Body of pancreas (tissue), 4 donors: ENCODE measurements at regions of chr7 and their contacts with region 1.

Region 1: DNA sequence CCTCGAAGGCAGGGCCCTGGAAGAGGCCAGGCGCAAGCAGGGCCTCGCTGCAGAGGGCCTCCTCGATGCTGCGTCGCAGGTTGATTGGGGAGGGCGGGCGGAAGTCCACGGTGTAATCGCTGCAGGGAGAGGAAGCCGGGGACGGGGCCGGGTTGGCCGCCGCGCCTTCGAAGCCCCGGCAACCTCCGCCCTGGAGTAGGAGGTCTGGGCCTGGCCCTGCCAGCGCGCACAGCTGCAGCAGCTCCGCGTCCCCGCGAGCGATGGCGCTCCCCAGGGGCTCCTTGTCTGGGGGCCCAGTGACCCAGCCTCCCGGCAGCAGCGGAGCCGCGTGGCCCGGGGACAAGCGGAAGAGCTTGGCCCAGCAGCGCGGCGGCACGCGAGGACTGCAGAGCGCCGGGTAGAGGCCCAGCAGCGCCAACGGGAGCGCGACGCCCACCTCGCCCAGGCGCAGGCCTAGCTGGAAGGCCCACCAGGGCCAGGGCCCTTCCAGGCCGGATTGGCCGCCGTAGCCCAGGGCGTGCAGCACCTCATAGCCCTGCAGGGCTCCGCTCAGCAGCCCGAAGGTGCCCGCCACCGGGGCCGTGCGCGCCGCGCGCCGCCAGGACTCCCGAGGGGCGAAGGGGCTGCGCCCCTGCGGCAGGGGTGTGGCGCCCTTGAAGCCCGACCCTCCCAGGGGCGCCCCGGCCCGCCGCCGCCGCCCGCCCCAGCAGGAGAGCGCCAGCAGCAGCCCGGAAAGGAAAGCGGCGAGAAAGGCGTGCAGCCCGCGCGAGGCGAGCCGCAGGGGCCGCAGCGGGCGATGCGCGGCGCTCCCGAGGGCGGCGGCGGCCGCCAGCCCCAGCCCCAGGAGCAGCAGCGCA is 7.8 kb upstream of the RBM28 start:
- DNase-seq: no peak
- ATAC-seq: no peak
- H3K4me3 ChIP-seq: no peak overlapping the region
- H3K27ac ChIP-seq: no peak overlapping the region
- H3K4me1 ChIP-seq: peaks cover 12% of the 10 kb centered on the region
- H3K27me3 ChIP-seq: peaks cover 0 to 11% of the 10 kb centered on the region in 2 donors
- CTCF ChIP-seq: no peak
- POLR2A ChIP-seq: no peak

Region 2: GRCh38 chr7:128387216-128388144 is 36.0 kb after region 1 on chr7:
- intact Hi-C with region 1: loop called (anchors 2 kb)
- DNase-seq: peak; percentile 69 to 77 (median 73)
- ATAC-seq: peak; percentile 79
- H3K4me3 ChIP-seq: no peak overlapping the region
- H3K27ac ChIP-seq: no peak overlapping the region
- H3K4me1 ChIP-seq: no peaks in the 10 kb centered on the region
- H3K27me3 ChIP-seq: no peaks in the 10 kb centered on the region
- CTCF ChIP-seq: peak; percentile 54 to 86 (median 73)
- POLR2A ChIP-seq: no peak

Region 3: DNA sequence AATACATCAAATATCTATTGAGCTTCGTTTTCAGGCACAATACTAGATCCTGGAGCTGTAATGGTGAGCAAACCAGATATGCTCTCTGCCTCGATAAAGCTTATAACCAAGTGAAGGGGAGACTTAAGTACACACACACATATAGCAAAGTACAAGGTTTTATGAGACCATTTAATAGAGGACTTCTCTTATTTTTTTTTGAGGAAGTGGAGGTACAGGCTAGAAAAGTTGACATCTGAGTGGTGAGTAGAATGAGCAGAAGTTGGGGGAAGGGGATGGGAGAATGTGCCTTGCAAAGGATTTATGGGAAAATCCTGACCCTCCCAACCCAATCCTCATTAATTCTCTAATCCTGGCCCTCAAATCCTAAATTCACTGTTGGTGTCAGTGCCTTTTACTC is 447.9 kb after region 1 on chr7:
- intact Hi-C with region 1: no loop called
- DNase-seq: no peak
- ATAC-seq: no peak
- H3K4me3 ChIP-seq: no peak overlapping the region
- H3K27ac ChIP-seq: no peak overlapping the region
- H3K4me1 ChIP-seq: no peaks in the 10 kb centered on the region
- H3K27me3 ChIP-seq: no peaks in the 10 kb centered on the region
- CTCF ChIP-seq: no peak
- POLR2A ChIP-seq: no peak